ENCODE measurements at regions of chr17 and their contacts with region 1.

Region 1: DNA sequence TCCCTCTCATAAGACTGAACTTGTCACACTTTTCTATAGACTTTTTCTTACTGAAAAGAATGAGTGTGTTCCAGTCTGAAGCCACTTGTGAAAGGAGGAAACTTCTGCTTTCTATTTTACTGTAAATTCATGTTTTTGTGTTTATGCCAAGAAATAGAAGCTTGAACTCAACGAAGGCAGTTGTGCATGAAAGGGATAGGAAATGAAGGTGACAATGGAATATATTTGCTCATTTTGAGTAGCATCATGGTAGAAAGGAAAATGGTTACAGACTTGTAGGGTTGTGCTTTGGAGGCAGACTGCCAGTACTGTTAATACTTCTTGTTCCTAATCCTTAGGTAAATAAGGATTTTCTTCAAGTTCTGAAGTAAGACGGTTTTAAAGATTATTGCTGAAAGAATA is 8.1 kb downstream of the CLTC start:
- DNase-seq: no peak
- H3K4me3 Mint-ChIP-seq: no peak overlapping the region
- H3K27ac Mint-ChIP-seq: peak overlapping the region; percentile 59
- H3K4me1 Mint-ChIP-seq: peaks cover 41% of the 10 kb centered on the region
- H3K27me3 Mint-ChIP-seq: no peaks in the 10 kb centered on the region

Region 2: GRCh38 chr17:59641799-59642489 is 14.2 kb after region 1 on chr17:
- intact Hi-C with region 1: loop called (anchors 2 kb)
- DNase-seq: peak; percentile 73
- H3K4me3 Mint-ChIP-seq: peak overlapping the region; percentile 65
- H3K27ac Mint-ChIP-seq: peak overlapping the region; percentile 56
- H3K4me1 Mint-ChIP-seq: peaks cover 35% of the 10 kb centered on the region
- H3K27me3 Mint-ChIP-seq: no peaks in the 10 kb centered on the region